T-cell (primary cell): ENCODE measurements at regions of chr1 and their contacts with region 1.

Region 1: GRCh38 chr1:145692771-145693443 is 14.3 kb downstream of the PDZK1 start:
- DNase-seq: no peak
- ATAC-seq: no peak
- H3K4me3 ChIP-seq: no peak overlapping the region
- H3K4me3 Mint-ChIP-seq: no peak overlapping the region
- H3K27ac ChIP-seq: no peak overlapping the region
- H3K27ac Mint-ChIP-seq: no peak overlapping the region
- H3K4me1 ChIP-seq: peaks cover 9 to 32% of the 10 kb centered on the region in 2 experiments
- H3K4me1 Mint-ChIP-seq: peaks cover 27 to 39% (median 31%) of the 10 kb centered on the region in 3 donors
- H3K27me3 ChIP-seq: no peaks in the 10 kb centered on the region
- H3K27me3 Mint-ChIP-seq: no peaks in the 10 kb centered on the region

Region 2: GRCh38 chr1:145795257-145795881 is 102.5 kb after region 1 on chr1:
- CTCF ChIA-PET with region 1: no interaction called
- POLR2A ChIA-PET with region 1: interaction called in 1 of 2 experiments, 16 read pairs
- DNase-seq: no peak
- ATAC-seq: no peak
- H3K4me3 ChIP-seq: no peak overlapping the region
- H3K4me3 Mint-ChIP-seq: no peak overlapping the region
- H3K27ac ChIP-seq: no peak overlapping the region
- H3K27ac Mint-ChIP-seq: no peak overlapping the region
- H3K4me1 ChIP-seq: no peaks in the 10 kb centered on the region
- H3K4me1 Mint-ChIP-seq: peaks cover 11 to 22% (median 13%) of the 10 kb centered on the region in 3 donors
- H3K27me3 ChIP-seq: no peaks in the 10 kb centered on the region
- H3K27me3 Mint-ChIP-seq: no peaks in the 10 kb centered on the region